Gastrocnemius medialis (tissue), 4 donors: ENCODE measurements at regions of chr18 and their contacts with region 1.

Region 1: DNA sequence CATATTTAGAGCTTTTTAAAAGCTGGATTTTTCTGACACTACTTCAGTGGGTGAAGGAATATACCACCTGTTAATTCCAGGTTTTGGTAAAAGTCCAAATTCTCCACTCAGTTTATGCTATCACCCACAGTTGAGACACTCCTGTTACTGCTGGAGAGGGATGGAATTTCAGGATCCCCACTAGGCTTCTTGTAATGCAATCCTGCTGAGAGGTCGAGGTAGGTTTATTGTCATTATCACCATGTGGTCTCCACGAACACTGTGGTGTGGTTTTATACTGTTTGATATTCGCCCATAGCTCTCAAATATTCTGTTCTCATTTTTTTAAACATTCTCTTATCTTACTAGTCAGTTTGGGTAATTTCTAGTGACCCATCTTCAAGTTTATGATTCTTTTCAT is 167.9 kb downstream of the CCDC102B start:
- DNase-seq: no peak
- ATAC-seq: no peak
- H3K4me3 ChIP-seq: no peak overlapping the region
- H3K27ac ChIP-seq: no peak overlapping the region
- H3K4me1 ChIP-seq: no peaks in the 10 kb centered on the region
- H3K27me3 ChIP-seq: no peaks in the 10 kb centered on the region
- CTCF ChIP-seq: no peak
- POLR2A ChIP-seq: no peak

Region 2: DNA sequence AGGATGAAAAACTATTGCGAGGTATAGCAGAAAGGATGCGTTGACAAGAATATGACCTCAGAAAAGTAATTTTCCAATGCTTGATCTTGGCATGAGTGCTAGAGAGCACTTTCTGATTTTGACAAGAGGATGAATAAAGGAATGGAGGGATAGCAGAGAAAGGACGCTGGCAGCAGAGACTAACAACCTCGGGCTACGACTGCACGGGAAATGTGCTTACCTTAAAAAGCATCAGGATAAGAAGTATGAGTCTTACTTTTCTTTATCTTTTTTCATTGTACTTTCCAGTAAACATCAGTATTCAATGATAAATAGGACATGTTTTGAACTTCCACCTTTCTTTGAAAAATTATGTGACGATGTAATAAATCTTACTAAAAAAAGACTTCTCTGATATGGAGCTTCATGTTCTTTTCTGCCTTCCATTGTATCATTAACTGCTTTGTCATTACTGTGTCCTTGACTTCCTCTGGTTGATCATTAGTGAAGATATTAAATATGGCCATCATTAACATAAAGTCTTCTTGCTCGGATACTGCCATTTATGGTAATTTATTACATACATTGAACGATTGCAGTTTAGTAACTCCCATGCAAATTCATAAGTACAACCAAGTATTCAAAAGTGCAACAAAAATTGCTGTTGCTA is 1714.9 kb before region 1 on chr18:
- in situ Hi-C with region 1: no loop called
- intact Hi-C with region 1: no loop called
- DNase-seq: no peak
- ATAC-seq: no peak
- H3K4me3 ChIP-seq: no peak overlapping the region
- H3K27ac ChIP-seq: no peak overlapping the region
- H3K4me1 ChIP-seq: no peaks in the 10 kb centered on the region
- H3K27me3 ChIP-seq: no peaks in the 10 kb centered on the region
- CTCF ChIP-seq: no peak
- POLR2A ChIP-seq: no peak

Region 3: DNA sequence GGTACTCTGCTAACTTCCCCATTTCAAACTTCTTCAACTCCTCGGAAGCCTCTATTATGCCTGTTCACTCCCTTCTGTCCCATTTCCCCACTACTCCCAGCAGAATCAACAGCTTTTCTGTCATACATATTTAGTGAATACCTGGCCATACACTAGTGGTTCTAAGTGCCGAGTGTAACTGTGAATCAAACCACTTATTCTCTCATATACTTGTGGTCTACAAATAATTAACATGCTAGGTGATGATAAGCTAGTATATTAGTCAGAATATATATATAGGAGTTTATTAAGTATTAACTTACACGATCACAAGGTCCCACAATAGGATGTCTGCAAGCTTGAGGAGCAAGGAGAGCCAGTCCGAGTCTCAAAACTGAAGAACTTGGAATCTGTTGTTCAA is 17.2 kb before region 1 on chr18:
- in situ Hi-C with region 1: no loop called
- intact Hi-C with region 1: loop called (anchors 2 kb)
- DNase-seq: no peak
- ATAC-seq: no peak
- H3K4me3 ChIP-seq: no peak overlapping the region
- H3K27ac ChIP-seq: no peak overlapping the region
- H3K4me1 ChIP-seq: no peaks in the 10 kb centered on the region
- H3K27me3 ChIP-seq: no peaks in the 10 kb centered on the region
- CTCF ChIP-seq: no peak
- POLR2A ChIP-seq: no peak

Region 4: DNA sequence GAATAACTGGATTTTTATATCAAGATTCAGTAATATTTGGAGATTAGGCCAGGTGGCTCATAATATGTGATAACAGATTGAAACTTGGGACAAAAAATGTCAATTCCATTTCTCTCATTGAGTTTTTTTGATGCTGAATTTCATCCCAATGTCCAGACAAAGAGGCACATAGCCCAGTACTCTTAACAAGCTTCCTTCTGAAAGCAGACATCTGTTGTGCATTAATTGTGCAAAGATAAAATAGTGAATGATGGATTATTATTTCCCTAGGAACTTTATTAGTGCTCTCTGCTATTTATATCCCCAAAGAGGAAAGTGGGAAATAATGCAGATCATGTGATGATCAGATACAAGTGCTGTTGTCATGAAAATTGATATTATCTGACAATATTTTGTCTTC is 66.2 kb after region 1 on chr18:
- in situ Hi-C with region 1: no loop called
- intact Hi-C with region 1: no loop called
- DNase-seq: no peak
- ATAC-seq: no peak
- H3K4me3 ChIP-seq: no peak overlapping the region
- H3K27ac ChIP-seq: no peak overlapping the region
- H3K4me1 ChIP-seq: no peaks in the 10 kb centered on the region
- H3K27me3 ChIP-seq: no peaks in the 10 kb centered on the region
- CTCF ChIP-seq: no peak
- POLR2A ChIP-seq: no peak